ENCODE measurements at regions of chr5 and their contacts with region 1.

Region 1: GRCh38 chr5:150789943-150790611 is 11.5 kb downstream of the SMIM3 start:
- DNase-seq: no peak
- ATAC-seq: peak in 1 of 2 donors; percentile 51
- H3K4me3 ChIP-seq: peak overlapping the region in 1 of 4 donors; percentile 2
- H3K27ac ChIP-seq: peak overlapping the region; percentile 34 to 44 (median 38)
- H3K4me1 ChIP-seq: peaks cover 3 to 28% of the 10 kb centered on the region in 2 donors
- H3K27me3 ChIP-seq: no peaks in the 10 kb centered on the region
- CTCF ChIP-seq: no peak
- POLR2A ChIP-seq: no peak

Region 2: DNA sequence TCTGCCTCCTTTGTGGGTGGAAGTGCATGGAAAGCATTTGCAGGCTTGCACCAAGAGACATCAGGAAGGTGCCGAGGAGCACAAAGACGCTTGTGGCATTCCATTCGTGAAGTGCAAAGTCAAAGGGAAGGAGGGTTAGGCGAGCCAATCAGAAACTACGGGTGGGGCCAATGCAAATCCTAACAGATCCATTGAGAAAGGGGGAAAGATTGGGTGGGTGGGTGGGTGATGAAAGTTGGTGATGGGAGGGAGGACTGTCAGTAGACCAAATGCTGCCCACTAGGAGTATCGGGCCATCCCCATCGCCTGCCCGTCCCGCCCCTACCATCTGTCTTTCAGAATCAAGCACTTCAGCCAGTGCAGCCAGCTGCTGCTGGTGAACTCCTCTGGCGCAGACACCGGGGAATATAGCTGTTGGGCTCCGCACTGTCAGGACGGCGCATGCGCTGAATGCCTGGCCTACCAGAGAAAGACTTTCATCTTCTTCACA is 384.6 kb after region 1 on chr5:
- in situ Hi-C with region 1: no loop called
- intact Hi-C with region 1: loop called (anchors 10 kb)
- DNase-seq: peak in 1 of 2 donors; percentile 68
- ATAC-seq: peak; percentile 28 to 60
- H3K4me3 ChIP-seq: no peak overlapping the region
- H3K27ac ChIP-seq: peak overlapping the region in 3 of 4 donors; percentile 25 to 74 (median 70)
- H3K4me1 ChIP-seq: peaks cover 19 to 25% of the 10 kb centered on the region in 2 donors
- H3K27me3 ChIP-seq: no peaks in the 10 kb centered on the region
- CTCF ChIP-seq: no peak
- POLR2A ChIP-seq: no peak

Region 3: DNA sequence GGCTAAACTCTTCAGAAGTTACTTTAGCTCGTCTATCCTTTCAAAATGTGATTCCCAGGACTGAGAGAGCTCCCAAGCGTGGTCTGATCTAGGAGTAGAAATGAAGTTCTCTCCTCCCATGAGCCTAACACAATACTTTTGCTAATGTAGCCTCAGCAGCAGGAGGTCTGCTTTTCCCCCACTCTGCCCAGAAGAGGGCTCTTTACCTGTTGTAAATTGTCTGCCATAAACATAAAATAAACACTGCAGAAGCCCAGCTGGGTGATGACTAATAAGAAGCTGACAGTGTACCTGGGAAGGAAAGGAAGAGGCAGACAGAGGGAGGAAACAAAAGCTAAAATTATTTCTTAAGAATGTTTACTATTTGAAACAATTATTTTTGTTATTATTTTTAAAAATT is 498.1 kb after region 1 on chr5:
- in situ Hi-C with region 1: no loop called
- intact Hi-C with region 1: no loop called
- DNase-seq: no peak
- ATAC-seq: no peak
- H3K4me3 ChIP-seq: no peak overlapping the region
- H3K27ac ChIP-seq: no peak overlapping the region
- H3K4me1 ChIP-seq: no peaks in the 10 kb centered on the region
- H3K27me3 ChIP-seq: no peaks in the 10 kb centered on the region
- CTCF ChIP-seq: no peak
- POLR2A ChIP-seq: no peak

Region 4: DNA sequence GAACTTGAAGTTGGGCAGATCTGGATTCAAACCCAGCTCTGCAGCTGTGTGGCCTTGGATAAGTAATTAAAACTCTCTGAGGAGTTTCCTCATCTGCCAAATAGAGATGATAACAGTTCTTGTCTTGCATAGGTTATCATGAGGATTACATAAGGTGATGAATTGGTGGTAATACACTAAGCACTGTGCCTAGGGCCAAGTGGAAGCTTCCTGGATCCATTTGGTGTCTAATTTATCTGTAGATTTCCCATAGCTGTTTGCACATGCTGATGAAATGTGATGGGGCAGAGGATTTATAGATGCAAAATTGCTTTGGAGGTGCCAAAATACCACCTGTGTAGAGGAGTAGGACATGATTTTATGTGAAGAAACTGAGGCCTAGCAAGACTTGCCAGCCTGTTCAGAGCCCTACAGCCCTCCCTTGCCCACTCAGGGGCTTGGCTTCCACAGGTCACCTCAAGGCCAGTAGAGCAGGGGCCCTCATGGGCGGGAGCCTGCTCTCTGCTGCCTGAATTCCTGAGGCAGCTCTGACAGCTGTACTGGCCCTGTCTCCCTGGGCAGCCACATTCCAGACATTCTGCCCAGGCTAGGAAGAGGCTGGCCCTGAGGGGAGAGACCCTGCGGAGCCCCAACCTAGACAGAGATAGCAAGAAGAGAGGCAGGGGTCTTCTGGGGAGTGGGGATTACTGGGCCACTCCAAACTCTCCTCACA is 806.9 kb after region 1 on chr5:
- in situ Hi-C with region 1: no loop called
- intact Hi-C with region 1: no loop called
- DNase-seq: no peak
- ATAC-seq: no peak
- H3K4me3 ChIP-seq: no peak overlapping the region
- H3K27ac ChIP-seq: no peak overlapping the region
- H3K4me1 ChIP-seq: no peaks in the 10 kb centered on the region
- H3K27me3 ChIP-seq: no peaks in the 10 kb centered on the region
- CTCF ChIP-seq: no peak
- POLR2A ChIP-seq: no peak

Measured in gastrocnemius medialis (tissue), 4 donors.